Cardiac septum (tissue), 1 donor: ENCODE measurements at regions of chr1 and their contacts with region 1.

Region 1: DNA sequence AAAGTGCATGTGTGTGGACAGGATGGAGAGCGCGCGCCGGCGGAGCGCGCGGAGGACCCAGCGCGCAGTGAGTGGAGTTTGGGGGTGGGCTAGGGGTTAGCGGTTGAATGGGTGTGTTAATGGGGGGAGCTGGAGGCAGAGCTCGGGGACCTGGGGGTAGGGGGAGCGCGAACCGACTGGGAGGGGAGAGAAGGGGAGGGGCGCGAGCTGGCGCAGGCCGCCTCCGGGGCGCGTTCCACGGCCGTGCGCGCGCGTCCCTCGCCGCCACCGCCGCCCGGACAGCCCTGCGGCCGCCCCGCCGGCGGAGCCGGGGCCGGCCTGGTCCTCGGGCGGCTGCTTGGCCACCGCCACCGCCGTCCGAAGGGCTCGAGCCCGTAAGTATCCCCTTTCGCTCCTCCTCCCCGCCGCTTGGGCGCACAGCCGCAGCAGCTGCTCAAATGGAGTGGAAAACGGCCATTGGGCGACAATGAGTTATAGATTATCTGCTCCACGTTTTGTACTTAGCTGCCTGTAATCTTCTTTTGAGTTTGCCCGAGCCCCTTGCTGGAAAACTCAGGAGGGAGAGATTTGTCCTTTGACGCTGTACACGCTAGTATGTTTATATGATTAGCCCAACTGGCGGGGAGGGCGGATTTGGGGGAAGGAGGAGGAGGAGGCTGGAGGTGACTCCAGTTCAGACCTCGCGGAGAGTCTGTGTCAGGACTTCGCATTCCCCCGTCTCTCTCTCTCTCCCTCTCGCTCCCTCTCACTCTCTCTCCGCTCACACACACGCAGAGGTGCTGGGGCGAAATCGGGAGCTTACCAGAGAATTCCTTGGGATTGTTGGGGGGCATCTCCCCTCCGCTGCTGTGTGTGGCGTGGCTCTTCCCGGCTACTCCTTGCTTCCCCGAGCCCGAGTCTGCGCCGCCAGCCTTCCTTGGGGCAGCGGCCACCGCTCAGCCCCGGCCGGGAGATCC is at the start of gene ADGRL2:
- DNase-seq: peak; percentile 86
- total RNA-seq, gene ADGRL2: 33.3 TPM

Region 2: DNA sequence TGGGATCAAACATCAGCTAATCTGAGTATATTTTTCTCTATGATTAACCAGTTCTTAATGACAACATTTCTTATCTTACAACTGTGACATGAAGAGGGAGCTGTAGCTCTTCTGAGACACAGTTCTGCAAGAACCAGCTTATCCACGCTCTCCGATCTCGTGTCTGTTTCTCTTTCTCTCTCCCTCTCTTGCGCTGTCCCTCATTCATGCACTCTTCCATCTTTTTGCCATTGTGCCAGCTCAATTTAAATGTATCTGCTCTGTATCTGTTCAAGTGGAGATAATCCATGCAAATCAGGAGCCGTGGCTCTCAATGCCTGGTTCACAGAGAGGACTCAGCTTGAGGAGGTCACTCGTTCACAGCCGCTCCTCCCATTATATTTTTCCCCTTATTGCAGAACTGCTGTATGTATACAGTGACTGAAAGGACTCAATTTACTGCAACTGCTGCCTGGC is 494.9 kb before region 1 on chr1:
- intact Hi-C with region 1: loop called (anchors 5 kb)
- DNase-seq: no peak

Region 3: GRCh38 chr1:81391125-81391828 is 409.7 kb before region 1 on chr1:
- intact Hi-C with region 1: no loop called
- DNase-seq: no peak

Region 4: GRCh38 chr1:81498471-81499462 is 302.2 kb before region 1 on chr1:
- intact Hi-C with region 1: loop called (anchors 5 kb)
- DNase-seq: no peak